ENCODE measurements at regions of chr5 and their contacts with region 1.

Region 1: DNA sequence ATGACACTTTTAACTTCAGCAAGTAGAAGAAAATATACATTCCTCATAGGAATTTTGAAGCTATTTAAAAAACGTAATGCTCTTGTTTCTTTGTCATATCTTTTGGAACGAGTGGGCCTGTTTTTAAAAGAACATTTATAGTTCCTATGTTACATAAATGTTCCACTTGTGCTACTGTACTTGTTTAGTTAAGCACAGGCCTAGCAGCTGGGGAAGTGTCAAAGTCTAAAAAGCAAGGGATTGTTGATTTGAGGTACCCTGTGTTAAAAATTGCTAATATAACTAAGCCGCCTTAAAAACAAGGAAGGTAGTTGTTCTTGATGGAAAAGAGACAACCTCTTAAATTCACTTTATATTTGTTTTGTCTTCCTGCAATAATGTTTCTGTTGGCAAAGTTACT is 27.2 kb upstream of the ELL2 start:
- DNase-seq: no peak
- H3K4me3 ChIP-seq: no peak overlapping the region
- H3K27ac ChIP-seq: no peak overlapping the region
- H3K4me1 ChIP-seq: peaks cover 9% of the 10 kb centered on the region
- H3K27me3 ChIP-seq: no peaks in the 10 kb centered on the region
- CTCF ChIP-seq: no peak

Region 2: DNA sequence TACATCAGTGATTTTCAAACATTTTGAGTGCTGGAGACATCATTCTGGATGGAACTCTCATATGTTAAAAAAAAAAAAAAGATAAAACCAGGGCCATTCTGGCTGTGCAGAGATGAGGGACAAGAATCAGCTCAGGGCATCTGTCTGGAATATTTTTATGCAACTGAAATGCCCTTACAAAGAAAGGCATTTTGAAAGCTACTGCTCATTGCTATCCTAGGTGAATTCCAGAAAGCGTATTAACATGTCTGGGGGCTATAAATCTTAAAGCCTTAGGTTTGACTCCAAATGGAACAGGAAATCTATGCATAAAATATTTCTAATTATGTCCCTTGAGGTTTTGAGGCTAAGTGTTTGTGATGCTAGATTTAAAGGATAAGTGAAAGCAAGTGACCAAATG is 459.1 kb after region 1 on chr5:
- CTCF ChIA-PET with region 1: no interaction called
- POLR2A ChIA-PET with region 1: interaction called, 15 read pairs
- intact Hi-C with region 1: no loop called
- DNase-seq: no peak
- H3K4me3 ChIP-seq: no peak overlapping the region
- H3K27ac ChIP-seq: no peak overlapping the region
- H3K4me1 ChIP-seq: no peaks in the 10 kb centered on the region
- H3K27me3 ChIP-seq: peaks cover 36% of the 10 kb centered on the region; the same call in 1 of the 2 replicates
- CTCF ChIP-seq: no peak